Activated CD8-positive, alpha-beta T cell treated with anti-CD3 and anti-CD28 coated beads, Interleukin-2, amount 10 ng/mL, durations not matched to agents 7 days and 5 days (primary cell): ENCODE measurements at regions of chr3 and their contacts with region 1.

Region 1: GRCh38 chr3:45688882-45689756 is at the start of gene SACM1L:
- DNase-seq: peak; percentile 98
- ATAC-seq: peak; percentile 86
- H3K4me3 Mint-ChIP-seq: peak within 1 kb of the TSS; percentile 85
- H3K27ac Mint-ChIP-seq: peak within 1 kb of the TSS; percentile 90
- H3K4me1 Mint-ChIP-seq: peaks cover 46% of the 10 kb centered on the region
- H3K27me3 Mint-ChIP-seq: peaks cover 3% of the 10 kb centered on the region
- total RNA-seq, gene SACM1L: 89.8 to 96.4 TPM

Region 2: GRCh38 chr3:45665101-45665572 is 24.0 kb before region 1 on chr3:
- CTCF ChIA-PET with region 1: interaction called, 52 read pairs
- POLR2A ChIA-PET with region 1: interaction called, 6 read pairs
- DNase-seq: peak; percentile 75
- ATAC-seq: peak; percentile 52
- H3K4me3 Mint-ChIP-seq: peak overlapping the region; percentile 81
- H3K27ac Mint-ChIP-seq: peak overlapping the region; percentile 86
- H3K4me1 Mint-ChIP-seq: peaks cover 47% of the 10 kb centered on the region
- H3K27me3 Mint-ChIP-seq: no peaks in the 10 kb centered on the region

Region 3: GRCh38 chr3:45677033-45677433 is 12.1 kb before region 1 on chr3:
- CTCF ChIA-PET with region 1: interaction called, 32 read pairs
- POLR2A ChIA-PET with region 1: interaction called, 5 read pairs
- DNase-seq: peak; percentile 82
- ATAC-seq: peak; percentile 92
- H3K4me3 Mint-ChIP-seq: peak overlapping the region; percentile 76
- H3K27ac Mint-ChIP-seq: peak overlapping the region; percentile 97
- H3K4me1 Mint-ChIP-seq: peaks cover 45% of the 10 kb centered on the region
- H3K27me3 Mint-ChIP-seq: no peaks in the 10 kb centered on the region

Region 4: DNA sequence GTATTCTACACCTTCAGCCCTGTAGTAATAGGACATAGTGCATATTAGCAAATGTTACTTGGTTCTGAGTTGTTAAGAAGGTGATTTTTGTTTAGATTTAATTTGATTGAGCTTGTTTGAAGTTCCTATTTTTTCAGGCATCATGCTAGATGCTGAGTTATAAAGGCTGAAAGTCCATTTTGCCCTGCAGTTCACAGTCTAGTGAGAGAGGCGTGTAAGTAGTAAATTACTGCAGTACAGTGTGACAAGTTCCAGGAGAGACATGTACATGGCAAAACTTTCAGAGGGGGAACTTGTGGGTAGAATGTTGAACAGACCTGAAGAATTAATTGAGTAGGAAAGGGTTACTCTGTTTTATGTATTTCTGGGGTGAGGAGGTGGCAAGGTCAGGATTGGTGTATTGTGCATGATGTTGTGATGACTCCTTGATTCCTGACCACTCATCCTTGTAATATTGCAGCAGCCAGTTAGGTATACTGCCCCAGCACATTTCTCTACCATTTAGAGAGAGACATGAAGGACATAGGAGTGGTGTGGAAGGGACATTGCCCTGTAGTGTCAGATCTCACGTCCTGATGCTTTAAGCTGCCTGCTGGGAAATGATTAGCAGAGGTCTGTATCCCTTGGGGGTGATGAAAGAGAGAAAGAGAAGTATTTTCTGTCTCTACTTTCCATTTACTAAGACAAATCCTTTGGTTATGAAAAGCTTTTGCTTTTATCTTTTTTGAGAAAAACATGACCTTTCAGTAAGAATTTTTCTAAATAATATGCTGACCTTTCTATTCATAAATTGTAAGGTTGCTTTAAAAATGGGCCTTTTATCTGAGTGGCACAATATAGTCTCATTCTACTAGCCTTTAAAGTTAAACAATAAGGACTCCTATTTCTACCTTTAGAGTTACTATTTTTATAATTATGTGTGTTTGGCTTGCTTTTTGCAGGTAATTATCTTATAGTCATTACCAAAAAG is 17.0 kb after region 1 on chr3:
- CTCF ChIA-PET with region 1: interaction called, 17 read pairs
- POLR2A ChIA-PET with region 1: interaction called, 3 read pairs
- DNase-seq: no peak
- ATAC-seq: no peak
- H3K4me3 Mint-ChIP-seq: no peak overlapping the region
- H3K27ac Mint-ChIP-seq: peak overlapping the region; percentile 4
- H3K4me1 Mint-ChIP-seq: peaks cover 19% of the 10 kb centered on the region
- H3K27me3 Mint-ChIP-seq: no peaks in the 10 kb centered on the region